MCF 10A (cell line): ENCODE measurements at regions of chr2 and their contacts with region 1.

Region 1: GRCh38 chr2:115083225-115083624 is 640.8 kb downstream of the DPP10 start:
- DNase-seq: peak; percentile 40
- H3K4me3 Mint-ChIP-seq: no peak overlapping the region
- H3K27ac Mint-ChIP-seq: no peak overlapping the region
- H3K4me1 Mint-ChIP-seq: peaks cover 6% of the 10 kb centered on the region
- H3K27me3 Mint-ChIP-seq: no peaks in the 10 kb centered on the region
- CTCF ChIP-seq: peak; percentile 21

Region 2: DNA sequence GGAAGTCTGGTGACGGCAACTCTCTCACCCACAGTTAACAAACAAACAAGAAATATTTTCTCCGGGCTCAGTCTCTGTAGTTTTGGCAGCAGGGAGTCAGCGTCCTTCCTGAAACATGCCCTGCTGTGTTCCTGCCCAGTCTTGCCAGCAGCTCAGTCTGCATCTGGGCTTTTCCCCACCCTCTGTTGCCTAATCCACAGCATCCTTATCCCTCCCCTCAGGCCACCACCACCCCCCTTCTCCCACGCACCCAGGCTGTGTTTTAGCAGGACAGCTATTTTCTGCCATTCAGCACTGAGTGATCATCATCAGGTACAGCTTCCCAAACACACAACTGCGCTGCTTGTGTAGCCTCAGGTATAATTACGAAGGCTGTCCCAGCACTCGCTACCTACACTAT is 472.5 kb before region 1 on chr2:
- CTCF ChIA-PET with region 1: no interaction called
- POLR2A ChIA-PET with region 1: no interaction called
- intact Hi-C with region 1: loop called (anchors 10 kb)
- DNase-seq: peak; percentile 71
- H3K4me3 Mint-ChIP-seq: no peak overlapping the region
- H3K27ac Mint-ChIP-seq: peak overlapping the region; percentile 24
- H3K4me1 Mint-ChIP-seq: no peaks in the 10 kb centered on the region
- H3K27me3 Mint-ChIP-seq: peaks cover 30% of the 10 kb centered on the region
- CTCF ChIP-seq: no peak

Region 3: DNA sequence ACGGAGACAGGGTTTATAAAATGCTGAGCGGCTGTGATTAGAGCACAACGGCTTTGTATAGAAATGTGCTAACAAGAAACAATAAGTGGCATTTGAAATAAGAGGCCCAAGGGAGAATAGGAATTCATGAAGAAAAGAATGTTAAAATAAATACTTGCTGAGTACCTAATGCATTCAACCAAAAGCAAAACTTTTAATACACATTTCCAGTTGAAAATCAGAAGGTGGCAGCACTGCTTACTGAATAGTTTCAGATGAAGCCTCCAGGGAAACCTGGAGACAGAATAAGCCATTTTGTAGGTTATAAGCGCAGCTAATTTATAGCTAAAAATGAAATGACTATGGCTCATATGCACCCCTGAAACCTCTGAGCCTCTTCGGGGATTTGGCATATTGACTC is 354.2 kb before region 1 on chr2:
- CTCF ChIA-PET with region 1: interaction called, 64 read pairs
- POLR2A ChIA-PET with region 1: no interaction called
- intact Hi-C with region 1: no loop called
- DNase-seq: peak; percentile 13
- H3K4me3 Mint-ChIP-seq: no peak overlapping the region
- H3K27ac Mint-ChIP-seq: no peak overlapping the region
- H3K4me1 Mint-ChIP-seq: no peaks in the 10 kb centered on the region
- H3K27me3 Mint-ChIP-seq: no peaks in the 10 kb centered on the region
- CTCF ChIP-seq: peak; percentile 14

Region 4: DNA sequence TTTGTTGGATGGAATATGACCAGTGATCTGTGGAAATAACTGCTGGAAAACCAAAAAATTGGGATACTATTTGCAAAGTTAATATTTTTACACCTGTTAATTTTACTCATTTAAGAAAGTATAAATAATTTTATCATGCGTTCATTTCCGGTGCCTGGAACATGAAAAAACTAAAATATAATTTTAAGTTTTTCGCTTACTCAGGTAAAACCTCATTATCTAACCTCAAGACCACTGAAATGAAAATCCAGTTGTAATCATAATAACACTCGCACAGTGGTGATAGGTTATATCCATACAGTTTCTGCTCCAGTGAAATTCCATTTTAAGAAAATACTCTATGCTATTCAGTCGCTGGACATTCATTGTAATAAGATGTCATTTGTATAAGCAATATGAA is 122.8 kb before region 1 on chr2:
- CTCF ChIA-PET with region 1: interaction called, 4 read pairs
- POLR2A ChIA-PET with region 1: no interaction called
- intact Hi-C with region 1: loop called (anchors 1 kb)
- DNase-seq: no peak
- H3K4me3 Mint-ChIP-seq: no peak overlapping the region
- H3K27ac Mint-ChIP-seq: no peak overlapping the region
- H3K4me1 Mint-ChIP-seq: no peaks in the 10 kb centered on the region
- H3K27me3 Mint-ChIP-seq: no peaks in the 10 kb centered on the region
- CTCF ChIP-seq: no peak

Region 5: GRCh38 chr2:115011721-115012120 is 71.5 kb before region 1 on chr2:
- CTCF ChIA-PET with region 1: no interaction called
- POLR2A ChIA-PET with region 1: no interaction called
- intact Hi-C with region 1: no loop called
- DNase-seq: no peak
- H3K4me3 Mint-ChIP-seq: no peak overlapping the region
- H3K27ac Mint-ChIP-seq: no peak overlapping the region
- H3K4me1 Mint-ChIP-seq: no peaks in the 10 kb centered on the region
- H3K27me3 Mint-ChIP-seq: no peaks in the 10 kb centered on the region
- CTCF ChIP-seq: no peak

Region 6: GRCh38 chr2:115129536-115129935 is 46.3 kb after region 1 on chr2:
- CTCF ChIA-PET with region 1: no interaction called
- POLR2A ChIA-PET with region 1: no interaction called
- intact Hi-C with region 1: no loop called
- DNase-seq: no peak
- H3K4me3 Mint-ChIP-seq: no peak overlapping the region
- H3K27ac Mint-ChIP-seq: no peak overlapping the region
- H3K4me1 Mint-ChIP-seq: no peaks in the 10 kb centered on the region
- H3K27me3 Mint-ChIP-seq: no peaks in the 10 kb centered on the region
- CTCF ChIP-seq: no peak